ENCODE measurements at regions of chr12 and their contacts with region 1.

Region 1: GRCh38 chr12:125049093-125049458 is 16.2 kb upstream of the AACS start:
- DNase-seq: no peak
- ATAC-seq: no peak
- H3K4me3 ChIP-seq: peak overlapping the region; percentile 2 to 68 (median 57)
- H3K27ac ChIP-seq: peak overlapping the region in 10 of 12 donors; percentile 50 to 83 (median 72)
- H3K4me1 ChIP-seq: peaks cover 0 to 10% (median 3%) of the 10 kb centered on the region in 12 donors
- H3K27me3 ChIP-seq: no peaks in the 10 kb centered on the region
- CTCF ChIP-seq: no peak
- POLR2A ChIP-seq: no peak

Region 2: DNA sequence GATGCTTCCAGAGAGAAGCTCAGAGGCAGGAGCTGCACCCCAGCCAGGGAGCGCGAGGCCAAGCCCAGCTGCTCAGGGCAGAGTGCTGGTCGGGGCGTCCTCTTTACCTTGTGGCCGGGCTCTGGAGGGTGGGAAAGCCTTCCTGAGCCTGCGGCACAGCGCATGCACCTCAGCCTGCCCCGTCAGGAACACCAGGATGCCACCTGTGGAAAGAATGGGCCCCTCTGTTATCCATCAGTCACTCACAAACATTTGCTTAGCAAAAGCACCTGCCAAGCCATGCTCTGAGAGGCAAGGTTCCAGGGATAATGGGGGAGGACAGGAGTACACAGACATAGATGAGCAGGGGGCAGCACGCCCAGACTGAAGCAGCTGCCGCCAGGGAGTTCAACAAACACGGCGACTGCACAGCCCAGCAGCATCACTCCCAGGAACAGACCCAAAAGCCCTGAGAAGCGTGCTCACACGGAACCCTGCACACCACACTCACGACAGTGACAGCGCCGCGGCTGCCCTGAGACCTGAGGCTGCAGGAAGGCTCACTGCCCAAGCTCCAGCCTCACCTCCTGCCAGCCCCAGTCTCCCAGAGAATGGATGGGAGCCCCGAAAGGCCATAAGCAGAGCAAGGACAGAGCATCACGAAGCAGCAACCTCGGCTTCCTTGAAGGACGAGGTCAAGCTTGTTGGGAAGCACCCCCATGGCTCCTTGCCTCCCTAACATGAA is 81.9 kb before region 1 on chr12:
- intact Hi-C with region 1: no loop called
- DNase-seq: no peak
- ATAC-seq: no peak
- H3K4me3 ChIP-seq: no peak overlapping the region
- H3K27ac ChIP-seq: no peak overlapping the region
- H3K4me1 ChIP-seq: no peaks in the 10 kb centered on the region
- H3K27me3 ChIP-seq: no peaks in the 10 kb centered on the region
- CTCF ChIP-seq: no peak
- POLR2A ChIP-seq: no peak

Region 3: DNA sequence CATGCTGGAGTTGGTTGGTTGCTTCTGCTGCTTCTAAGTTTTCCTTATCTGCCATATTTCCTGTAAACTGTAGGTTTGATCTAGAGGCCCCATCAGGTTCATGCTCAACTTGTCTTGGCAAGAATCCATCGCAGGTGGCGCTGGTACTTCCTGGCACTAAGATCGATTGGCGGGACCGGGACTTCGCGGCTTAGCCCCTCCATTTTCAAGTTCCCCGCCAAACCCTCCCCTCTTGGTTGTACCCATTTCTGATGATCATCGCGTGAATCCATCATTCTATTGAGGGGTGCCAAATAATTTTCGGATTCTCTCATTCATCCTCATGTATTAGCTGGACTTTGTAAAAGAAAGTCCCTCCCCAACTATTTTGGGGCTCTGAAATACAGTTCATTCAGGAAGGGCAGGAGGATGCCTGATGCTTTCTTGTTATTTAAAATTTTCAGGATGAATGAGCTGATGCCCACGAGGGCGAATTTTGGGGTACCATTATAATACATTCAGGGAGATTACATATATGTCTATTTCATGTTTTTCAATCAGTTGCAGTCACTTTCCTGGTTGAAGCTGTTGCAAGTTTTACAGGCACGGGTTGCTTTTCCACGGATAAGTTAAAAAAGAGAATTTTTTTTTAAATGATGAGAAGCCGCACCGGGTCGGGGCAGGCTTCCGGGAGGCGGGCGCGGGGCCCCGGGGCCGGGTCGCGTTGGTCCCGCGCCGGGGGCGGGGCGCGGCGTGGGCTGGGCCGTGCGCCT is 56.0 kb before region 1 on chr12:
- intact Hi-C with region 1: loop called in 1 of 10 experiments (anchors 2 kb)
- DNase-seq: peak in 3 of 5 donors; percentile 56 to 75 (median 74)
- ATAC-seq: peak; percentile 20 to 83 (median 70)
- H3K4me3 ChIP-seq: peak overlapping the region; percentile 14 to 89 (median 58)
- H3K27ac ChIP-seq: peak overlapping the region in 3 of 12 donors; percentile 22 to 71 (median 29)
- H3K4me1 ChIP-seq: peaks cover 0 to 38% (median 15%) of the 10 kb centered on the region in 12 donors
- H3K27me3 ChIP-seq: no peaks in the 10 kb centered on the region
- CTCF ChIP-seq: peak in 3 of 12 donors; percentile 9 to 13 (median 10)
- POLR2A ChIP-seq: no peak

Region 4: DNA sequence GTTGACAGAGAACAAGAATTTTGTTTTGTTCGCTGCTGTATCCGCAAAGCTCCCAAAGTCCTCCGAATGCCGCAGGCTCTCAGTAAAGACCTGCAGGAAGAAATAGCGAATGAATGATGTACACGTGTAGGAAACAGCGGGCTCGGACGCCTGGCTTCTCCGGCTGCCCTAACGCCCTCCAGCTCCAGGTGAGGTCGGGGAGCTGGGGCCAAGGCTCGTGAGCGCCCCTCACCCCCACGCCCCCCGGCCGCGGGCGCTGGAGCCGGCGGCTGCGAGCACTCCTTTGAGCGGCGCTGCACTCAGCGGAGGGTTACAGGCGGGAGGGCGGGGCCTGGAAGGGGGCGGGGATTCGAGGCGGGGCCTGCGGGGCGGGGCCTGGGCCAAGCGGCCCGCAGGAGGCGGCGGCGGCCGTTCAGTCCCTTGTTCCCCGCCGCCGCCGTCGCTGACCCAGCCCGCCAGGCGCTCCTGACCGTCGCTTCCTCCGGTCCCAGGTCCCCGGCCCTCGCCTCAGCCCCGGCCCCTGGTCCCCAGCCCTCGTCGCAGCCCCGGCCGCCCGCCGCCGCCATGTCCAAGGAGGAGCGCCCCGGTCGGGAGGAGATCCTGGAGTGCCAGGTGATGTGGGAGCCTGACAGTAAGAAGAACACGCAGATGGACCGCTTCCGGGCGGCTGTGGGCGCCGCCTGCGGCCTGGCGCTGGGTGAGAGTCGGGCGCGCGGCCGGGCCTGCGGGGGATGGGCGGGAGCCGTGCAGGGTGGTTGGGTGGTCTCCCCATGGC is 16.1 kb after region 1 on chr12 and contains the start of gene AACS:
- intact Hi-C with region 1: loop called in 4 of 10 experiments (anchors 1 to 2 kb)
- DNase-seq: peak; percentile 79 to 91 (median 82)
- ATAC-seq: peak; percentile 75 to 97 (median 93)
- H3K4me3 ChIP-seq: peak within 1 kb of the TSS; percentile 45 to 97 (median 88)
- H3K27ac ChIP-seq: peak within 1 kb of the TSS in 11 of 12 donors; percentile 40 to 85 (median 73)
- H3K4me1 ChIP-seq: peaks cover 0 to 45% (median 18%) of the 10 kb centered on the region in 12 donors
- H3K27me3 ChIP-seq: peaks cover 0 to 4% (median 0%) of the 10 kb centered on the region in 9 donors
- CTCF ChIP-seq: peak in 1 of 12 donors; percentile 16
- POLR2A ChIP-seq: peak in 1 of 2 donors; percentile 62
- total RNA-seq, gene AACS: 10.2 to 19.3 (median 12.4) TPM

Region 5: GRCh38 chr12:125381373-125381772 is 332.3 kb after region 1 on chr12:
- intact Hi-C with region 1: no loop called
- DNase-seq: no peak
- ATAC-seq: peak in 1 of 4 donors; percentile 24
- H3K4me3 ChIP-seq: no peak overlapping the region
- H3K27ac ChIP-seq: no peak overlapping the region
- H3K4me1 ChIP-seq: peaks cover 0 to 2% (median 0%) of the 10 kb centered on the region in 12 donors
- H3K27me3 ChIP-seq: peaks cover 0 to 7% (median 0%) of the 10 kb centered on the region in 9 donors
- CTCF ChIP-seq: no peak
- POLR2A ChIP-seq: no peak